CD4-positive, alpha-beta T cell (primary cell): ENCODE measurements at regions of chr2 and their contacts with region 1.

Region 1: GRCh38 chr2:241734467-241735208 is at the start of gene D2HGDH:
- DNase-seq: peak; percentile 86 to 98 (median 94)
- ATAC-seq: peak; percentile 92
- H3K4me3 ChIP-seq: peak within 1 kb of the TSS; percentile 71
- H3K4me3 Mint-ChIP-seq: peak within 1 kb of the TSS; percentile 85
- H3K27ac ChIP-seq: peak within 1 kb of the TSS in 1 of 2 donors; percentile 71
- H3K27ac Mint-ChIP-seq: peak within 1 kb of the TSS; percentile 65
- H3K4me1 ChIP-seq: peaks cover 48% of the 10 kb centered on the region
- H3K4me1 Mint-ChIP-seq: peaks cover 12% of the 10 kb centered on the region
- H3K27me3 ChIP-seq: no peaks in the 10 kb centered on the region
- H3K27me3 Mint-ChIP-seq: no peaks in the 10 kb centered on the region
- CTCF ChIP-seq: no peak
- total RNA-seq, gene D2HGDH: 27.6 to 30.6 TPM

Region 2: DNA sequence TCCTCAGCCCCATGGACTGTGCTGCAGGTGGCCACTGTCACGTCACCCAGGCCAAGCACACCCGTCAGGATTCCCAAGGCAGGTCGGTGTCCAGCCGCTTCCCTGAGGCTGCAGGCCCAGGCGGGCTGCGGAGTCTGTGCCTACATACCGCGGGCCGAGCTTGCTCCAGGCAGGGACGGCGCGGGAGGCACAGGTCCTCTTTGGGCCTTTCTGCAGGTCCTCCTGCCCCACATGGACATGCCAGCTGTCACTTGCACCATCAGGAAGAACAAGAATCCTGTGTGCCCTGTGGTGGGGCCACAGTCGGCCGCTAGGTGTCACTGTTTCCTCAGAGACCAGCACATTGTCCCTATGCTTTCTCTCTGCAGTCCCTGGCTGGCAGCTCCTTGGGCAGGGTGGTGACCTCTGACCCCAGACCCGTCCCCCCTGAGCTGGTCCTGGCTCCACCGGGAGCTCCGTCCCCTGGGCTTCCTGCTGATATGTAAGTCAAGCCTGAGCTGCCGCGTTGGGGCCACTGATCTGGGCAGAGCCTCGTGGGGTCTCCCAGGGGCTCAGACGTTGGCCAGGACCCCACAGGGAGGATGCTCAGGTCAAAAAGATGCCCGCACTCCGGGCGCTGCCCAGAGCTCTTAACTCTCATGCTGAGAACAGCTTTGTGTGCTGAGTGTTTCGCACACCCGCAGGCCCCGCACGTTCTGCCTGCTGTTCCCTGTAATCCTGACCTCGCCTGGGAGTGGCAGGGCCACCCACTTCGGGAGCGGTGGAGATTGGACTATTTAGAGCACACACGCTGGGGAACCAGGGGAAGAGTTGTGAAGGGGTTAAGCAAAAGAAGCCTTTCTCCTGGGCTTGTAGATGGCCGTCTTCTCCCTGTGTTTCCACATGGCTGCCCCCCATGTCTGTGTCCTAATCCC is 883.3 kb before region 1 on chr2:
- CTCF ChIA-PET with region 1: no interaction called
- POLR2A ChIA-PET with region 1: no interaction called
- intact Hi-C with region 1: loop called (anchors 5 kb)
- DNase-seq: peak; percentile 72 to 90 (median 82)
- ATAC-seq: peak; percentile 97
- H3K4me3 ChIP-seq: no peak overlapping the region
- H3K4me3 Mint-ChIP-seq: no peak overlapping the region
- H3K27ac ChIP-seq: no peak overlapping the region
- H3K27ac Mint-ChIP-seq: no peak overlapping the region
- H3K4me1 ChIP-seq: no peaks in the 10 kb centered on the region
- H3K4me1 Mint-ChIP-seq: no peaks in the 10 kb centered on the region
- H3K27me3 ChIP-seq: no peaks in the 10 kb centered on the region
- H3K27me3 Mint-ChIP-seq: peaks cover 3% of the 10 kb centered on the region
- CTCF ChIP-seq: peak; percentile 88

Region 3: GRCh38 chr2:241508240-241509154 is 226.1 kb before region 1 on chr2 and contains the start of gene STK25:
- CTCF ChIA-PET with region 1: no interaction called
- POLR2A ChIA-PET with region 1: no interaction called
- intact Hi-C with region 1: loop called in 1 of 2 experiments (anchors 2 kb)
- DNase-seq: peak; percentile 94 to 99 (median 98)
- ATAC-seq: peak; percentile 95
- H3K4me3 ChIP-seq: peak within 1 kb of the TSS; percentile 63
- H3K4me3 Mint-ChIP-seq: peak within 1 kb of the TSS; percentile 94
- H3K27ac ChIP-seq: peak within 1 kb of the TSS; percentile 18 to 77
- H3K27ac Mint-ChIP-seq: peak within 1 kb of the TSS; percentile 78
- H3K4me1 ChIP-seq: peaks cover 30% of the 10 kb centered on the region
- H3K4me1 Mint-ChIP-seq: peaks cover 15% of the 10 kb centered on the region
- H3K27me3 ChIP-seq: no peaks in the 10 kb centered on the region
- H3K27me3 Mint-ChIP-seq: no peaks in the 10 kb centered on the region
- CTCF ChIP-seq: no peak
- total RNA-seq, gene STK25: 76.1 to 81.3 TPM

Region 4: GRCh38 chr2:241637000-241637791 is 97.4 kb before region 1 on chr2 and contains the starts of genes ATG4B and THAP4:
- CTCF ChIA-PET with region 1: no interaction called
- POLR2A ChIA-PET with region 1: no interaction called
- intact Hi-C with region 1: loop called in 1 of 2 experiments (anchors 5 kb)
- DNase-seq: peak; percentile 52 to 89 (median 68)
- ATAC-seq: peak; percentile 66
- H3K4me3 ChIP-seq: peak within 1 kb of the TSS; percentile 76
- H3K4me3 Mint-ChIP-seq: peak within 1 kb of the TSS; percentile 95
- H3K27ac ChIP-seq: peak within 1 kb of the TSS; percentile 82 to 93
- H3K27ac Mint-ChIP-seq: peak within 1 kb of the TSS; percentile 84
- H3K4me1 ChIP-seq: peaks cover 45% of the 10 kb centered on the region
- H3K4me1 Mint-ChIP-seq: peaks cover 56% of the 10 kb centered on the region
- H3K27me3 ChIP-seq: no peaks in the 10 kb centered on the region
- H3K27me3 Mint-ChIP-seq: no peaks in the 10 kb centered on the region
- CTCF ChIP-seq: no peak
- total RNA-seq, gene ATG4B: 86.5 to 89.4 TPM
- total RNA-seq, gene THAP4: 27.5 to 31.4 TPM

Region 5: GRCh38 chr2:241702132-241703031 is 32.3 kb before region 1 on chr2:
- CTCF ChIA-PET with region 1: interaction called, 19 read pairs
- POLR2A ChIA-PET with region 1: interaction called, 49 read pairs
- intact Hi-C with region 1: loop called (anchors 1 kb)
- DNase-seq: peak; percentile 81 to 94 (median 84)
- ATAC-seq: peak; percentile 73
- H3K4me3 ChIP-seq: peak overlapping the region; percentile 73
- H3K4me3 Mint-ChIP-seq: peak overlapping the region; percentile 93
- H3K27ac ChIP-seq: peak overlapping the region; percentile 34 to 67
- H3K27ac Mint-ChIP-seq: peak overlapping the region; percentile 87
- H3K4me1 ChIP-seq: peaks cover 28% of the 10 kb centered on the region
- H3K4me1 Mint-ChIP-seq: peaks cover 28% of the 10 kb centered on the region
- H3K27me3 ChIP-seq: no peaks in the 10 kb centered on the region
- H3K27me3 Mint-ChIP-seq: no peaks in the 10 kb centered on the region
- CTCF ChIP-seq: peak; percentile 60

Region 6: DNA sequence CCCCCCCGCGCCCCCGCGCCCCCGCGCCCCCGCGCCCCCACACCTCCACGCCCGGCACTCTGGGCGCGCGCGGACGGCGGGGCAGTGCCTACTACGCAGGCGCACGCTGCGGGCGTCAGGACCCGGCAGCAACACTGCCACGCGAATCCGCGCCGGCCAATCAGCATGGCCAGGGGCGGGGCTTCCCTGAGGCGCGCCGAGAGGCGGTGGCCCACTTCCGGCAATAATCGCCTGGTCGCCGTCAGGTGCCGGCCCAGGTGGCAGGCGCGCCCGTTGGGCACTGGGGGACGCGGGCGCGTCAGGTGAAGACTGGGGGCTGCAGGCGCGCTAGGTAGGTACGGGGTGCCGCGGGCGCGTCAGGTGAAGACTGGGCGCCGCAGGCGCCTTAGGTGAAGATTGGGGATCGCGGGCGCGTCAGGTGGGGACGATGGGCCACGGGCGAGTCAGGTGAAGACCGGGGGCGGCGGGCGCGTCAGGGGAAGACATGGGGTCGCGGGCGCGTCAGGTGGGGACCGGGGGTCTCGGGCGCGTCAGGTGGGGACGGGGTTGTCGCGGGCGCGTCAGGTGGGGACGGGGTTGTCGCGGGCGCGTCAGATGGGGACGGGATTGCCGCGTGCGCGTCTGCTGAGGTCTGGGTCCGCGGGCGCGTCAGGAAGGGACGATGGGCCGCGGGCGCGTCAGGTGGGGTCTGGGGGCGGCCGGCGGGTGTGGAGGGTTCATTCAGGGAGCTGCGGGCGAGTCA is 354.0 kb after region 1 on chr2:
- CTCF ChIA-PET with region 1: no interaction called
- POLR2A ChIA-PET with region 1: no interaction called
- intact Hi-C with region 1: loop called in 1 of 2 experiments (anchors 5 kb)
- DNase-seq: peak; percentile 84 to 96 (median 92)
- ATAC-seq: peak; percentile 95
- H3K4me3 ChIP-seq: peak overlapping the region; percentile 59
- H3K4me3 Mint-ChIP-seq: peak overlapping the region; percentile 97
- H3K27ac ChIP-seq: no peak overlapping the region
- H3K27ac Mint-ChIP-seq: peak overlapping the region; percentile 97
- H3K4me1 ChIP-seq: peaks cover 26% of the 10 kb centered on the region
- H3K4me1 Mint-ChIP-seq: peaks cover 33% of the 10 kb centered on the region
- H3K27me3 ChIP-seq: no peaks in the 10 kb centered on the region
- H3K27me3 Mint-ChIP-seq: no peaks in the 10 kb centered on the region
- CTCF ChIP-seq: no peak